ENCODE measurements at regions of chr1 and their contacts with region 1.

Region 1: GRCh38 chr1:201877877-201878401 is 10.8 kb upstream of the SHISA4 start:
- DNase-seq: peak in 1 of 3 donors; percentile 61
- ATAC-seq: peak; percentile 52 to 55
- H3K4me3 ChIP-seq: no peak overlapping the region
- H3K27ac ChIP-seq: peak overlapping the region; percentile 20
- H3K4me1 ChIP-seq: no peaks in the 10 kb centered on the region
- H3K27me3 ChIP-seq: no peaks in the 10 kb centered on the region

Region 2: DNA sequence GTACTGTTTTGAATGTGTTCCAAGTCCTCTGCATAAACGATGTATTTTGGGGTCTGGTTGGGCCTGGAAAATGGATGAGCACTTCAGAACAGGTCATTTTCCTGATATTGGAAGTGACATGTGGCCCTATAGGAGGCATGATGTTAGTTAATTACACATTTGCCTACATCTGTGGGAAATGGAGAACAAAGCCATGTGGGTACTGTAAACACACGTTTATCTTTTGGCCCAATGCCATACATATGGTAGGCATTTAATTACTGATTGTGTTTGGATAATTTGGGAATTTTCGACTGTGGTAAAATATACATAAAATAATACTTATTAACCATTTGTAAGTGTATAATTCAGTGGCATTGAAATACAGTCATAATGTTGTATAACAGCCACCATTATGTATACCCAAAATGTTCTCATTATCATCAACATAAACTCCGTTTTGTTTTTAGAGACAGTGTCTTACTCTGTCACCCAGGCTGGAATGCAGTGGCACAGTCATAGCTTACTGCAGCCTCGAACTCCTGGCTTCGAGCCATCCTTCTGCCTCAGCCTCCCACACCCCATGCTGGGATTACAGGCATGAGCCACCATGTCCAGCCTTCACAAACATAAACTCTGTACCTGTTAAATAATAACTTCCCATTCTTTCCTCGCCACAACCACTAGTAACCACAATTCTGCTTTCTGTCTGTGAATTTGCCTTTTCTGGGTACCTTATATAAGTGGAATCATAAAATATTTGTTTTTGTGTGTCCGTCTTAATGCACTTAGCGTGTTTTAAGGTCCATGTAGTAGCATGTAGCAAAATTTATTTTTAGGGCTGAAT is 92.6 kb after region 1 on chr1:
- intact Hi-C with region 1: loop called in 2 of 4 experiments (anchors 5 kb)
- DNase-seq: peak in 1 of 3 donors; percentile 31
- ATAC-seq: no peak
- H3K4me3 ChIP-seq: no peak overlapping the region
- H3K27ac ChIP-seq: no peak overlapping the region
- H3K4me1 ChIP-seq: no peaks in the 10 kb centered on the region
- H3K27me3 ChIP-seq: no peaks in the 10 kb centered on the region